Endothelial cell of umbilical vein (primary cell): ENCODE measurements at regions of chr2 and their contacts with region 1.

Region 1: GRCh38 chr2:118046634-118047210 is 32.9 kb upstream of the CCDC93 start:
- DNase-seq: peak; percentile 60
- H3K4me3 ChIP-seq: no peak overlapping the region
- H3K27ac ChIP-seq: no peak overlapping the region
- H3K4me1 ChIP-seq: peaks cover 26% of the 10 kb centered on the region
- H3K27me3 ChIP-seq: peaks cover 10 to 13% of the 10 kb centered on the region in 2 experiments
- CTCF ChIP-seq: peak; percentile 41 to 44
- POLR2A ChIP-seq: no peak

Region 2: DNA sequence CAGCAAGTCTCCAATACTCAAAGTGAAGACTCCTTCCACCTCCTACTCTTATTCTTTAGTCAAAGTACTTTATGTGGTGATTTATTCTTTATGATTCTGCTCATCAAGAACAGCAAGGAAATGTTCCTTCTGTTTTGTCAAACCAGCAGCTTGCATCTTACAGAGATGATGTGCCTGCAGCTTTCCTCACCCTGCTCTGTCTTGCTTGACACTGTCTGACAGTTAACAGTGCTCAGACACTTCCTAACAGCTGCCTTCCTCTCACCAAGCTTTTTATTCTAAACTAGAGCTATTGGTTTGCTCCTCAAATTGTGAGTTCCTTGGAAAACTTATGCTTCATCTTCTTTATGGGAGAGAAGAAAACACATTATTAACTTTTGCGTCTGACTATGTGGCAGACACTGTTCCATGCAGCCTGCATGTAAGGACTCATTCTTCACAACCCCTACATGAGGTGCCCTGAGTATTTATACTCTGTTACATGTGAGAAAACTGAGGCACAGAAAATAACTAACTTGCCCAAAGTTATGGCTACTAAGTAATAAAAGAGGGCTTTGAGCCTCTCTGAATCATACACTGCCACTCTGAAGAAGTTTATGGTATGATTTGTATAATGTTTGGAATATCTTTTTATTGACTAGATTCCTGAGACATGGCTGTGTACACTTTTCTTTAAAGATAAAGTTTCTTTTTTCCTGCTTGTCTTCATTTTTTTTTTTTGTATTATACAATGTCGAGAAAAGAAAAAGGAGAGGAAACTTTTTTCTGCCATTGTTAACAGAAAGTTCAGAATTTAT is 955.5 kb before region 1 on chr2:
- CTCF ChIA-PET with region 1: no interaction called
- POLR2A ChIA-PET with region 1: no interaction called
- dilution Hi-C with region 1: no loop called
- intact Hi-C with region 1: no loop called
- DNase-seq: no peak
- H3K4me3 ChIP-seq: no peak overlapping the region
- H3K27ac ChIP-seq: no peak overlapping the region
- H3K4me1 ChIP-seq: no peaks in the 10 kb centered on the region
- H3K27me3 ChIP-seq: no peaks in the 10 kb centered on the region
- CTCF ChIP-seq: no peak
- POLR2A ChIP-seq: no peak

Region 3: DNA sequence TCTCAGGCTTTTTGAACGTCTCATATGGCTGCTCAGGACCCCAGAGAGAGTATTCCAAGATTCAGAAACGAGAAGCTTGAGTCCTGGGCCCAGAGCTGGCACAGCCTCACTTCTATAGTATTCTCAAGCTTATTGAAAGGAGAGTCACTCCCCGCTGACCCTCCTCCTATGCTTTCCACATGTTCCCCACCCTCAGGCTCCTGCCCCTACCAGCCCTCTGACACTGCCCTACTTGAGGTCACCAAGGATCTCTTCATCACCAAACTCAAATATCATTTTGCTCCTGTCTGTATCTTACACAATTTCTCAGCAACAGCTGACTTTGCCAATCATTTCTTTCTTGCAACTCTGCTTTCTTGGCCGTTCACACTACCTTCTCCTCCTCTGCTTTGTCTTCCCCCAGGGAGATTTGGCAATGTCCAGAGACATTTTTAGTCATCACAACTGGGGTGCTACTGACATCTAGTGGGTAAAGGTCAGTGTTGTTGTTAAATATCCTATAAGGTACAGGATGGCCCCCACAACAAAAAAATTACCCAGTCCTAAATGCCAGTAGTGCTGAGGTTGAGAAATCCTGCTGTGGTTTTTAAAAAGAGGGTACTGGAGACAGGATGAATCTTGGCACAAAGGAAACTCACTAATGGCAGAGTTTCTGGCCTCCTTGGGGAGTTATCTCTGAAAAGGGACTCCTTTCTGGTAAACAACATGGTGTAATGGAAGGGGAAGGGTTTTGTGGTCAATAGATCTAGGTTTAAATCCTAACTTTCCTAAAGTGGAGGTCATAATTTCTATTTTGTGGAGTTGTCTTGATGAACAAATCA is 14.6 kb after region 1 on chr2:
- CTCF ChIA-PET with region 1: interaction called, 75 read pairs
- POLR2A ChIA-PET with region 1: no interaction called
- dilution Hi-C with region 1: no loop called
- intact Hi-C with region 1: loop called (anchors 2 kb)
- DNase-seq: peak; percentile 7
- H3K4me3 ChIP-seq: no peak overlapping the region
- H3K27ac ChIP-seq: no peak overlapping the region
- H3K4me1 ChIP-seq: no peaks in the 10 kb centered on the region
- H3K27me3 ChIP-seq: peaks cover 5 to 8% of the 10 kb centered on the region in 2 experiments
- CTCF ChIP-seq: no peak
- POLR2A ChIP-seq: no peak

Region 4: GRCh38 chr2:118122594-118123281 is 76.0 kb after region 1 on chr2:
- CTCF ChIA-PET with region 1: interaction called, 21 read pairs
- POLR2A ChIA-PET with region 1: no interaction called
- dilution Hi-C with region 1: no loop called
- intact Hi-C with region 1: loop called (anchors 2 kb)
- DNase-seq: no peak
- H3K4me3 ChIP-seq: no peak overlapping the region
- H3K27ac ChIP-seq: peak overlapping the region; percentile 62
- H3K4me1 ChIP-seq: peaks cover 28% of the 10 kb centered on the region
- H3K27me3 ChIP-seq: no peaks in the 10 kb centered on the region
- CTCF ChIP-seq: no peak
- POLR2A ChIP-seq: no peak

Region 5: DNA sequence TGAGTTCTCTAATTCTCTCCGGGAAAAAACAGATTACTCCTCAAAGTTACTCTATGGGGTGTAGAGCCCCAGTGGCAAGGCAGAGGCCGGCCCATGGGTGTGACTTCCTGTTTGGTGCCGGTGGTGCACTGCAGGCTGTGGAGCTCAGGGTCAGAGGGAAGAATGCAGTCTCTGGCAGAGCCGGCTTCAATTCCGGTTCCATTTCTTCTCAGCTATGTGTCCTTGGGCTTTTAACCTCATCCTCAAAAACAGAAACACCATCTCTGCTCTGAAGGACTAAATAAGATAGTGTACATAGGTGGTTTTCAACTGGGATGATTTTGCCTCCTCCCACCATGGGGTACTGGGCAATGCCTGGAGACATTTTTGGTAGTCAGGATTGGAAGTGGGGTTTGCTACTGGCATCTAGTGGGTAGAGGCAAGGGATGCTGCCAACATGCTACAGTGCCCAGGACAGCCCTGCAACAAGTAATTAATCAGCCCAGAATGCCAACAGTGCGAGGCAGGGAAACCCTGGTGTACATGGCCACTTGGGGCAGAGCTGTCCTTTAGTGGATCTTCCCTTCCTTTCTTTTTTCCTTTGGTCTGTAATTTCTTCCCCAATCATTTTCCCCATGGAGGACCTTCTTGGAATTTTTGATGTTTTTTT is 122.8 kb after region 1 on chr2:
- CTCF ChIA-PET with region 1: interaction called, 10 read pairs
- POLR2A ChIA-PET with region 1: no interaction called
- dilution Hi-C with region 1: no loop called
- intact Hi-C with region 1: no loop called
- DNase-seq: no peak
- H3K4me3 ChIP-seq: no peak overlapping the region
- H3K27ac ChIP-seq: no peak overlapping the region
- H3K4me1 ChIP-seq: no peaks in the 10 kb centered on the region
- H3K27me3 ChIP-seq: peaks cover 0 to 5% of the 10 kb centered on the region in 2 experiments
- CTCF ChIP-seq: peak in 1 of 2 donors; percentile 7
- POLR2A ChIP-seq: no peak

Region 6: GRCh38 chr2:118207889-118208288 is 161.2 kb after region 1 on chr2:
- CTCF ChIA-PET with region 1: interaction called, 26 read pairs
- POLR2A ChIA-PET with region 1: no interaction called
- dilution Hi-C with region 1: no loop called
- intact Hi-C with region 1: loop called (anchors 2 kb)
- DNase-seq: no peak
- H3K4me3 ChIP-seq: no peak overlapping the region
- H3K27ac ChIP-seq: no peak overlapping the region
- H3K4me1 ChIP-seq: no peaks in the 10 kb centered on the region
- H3K27me3 ChIP-seq: peaks cover 7 to 10% of the 10 kb centered on the region in 2 experiments
- CTCF ChIP-seq: no peak
- POLR2A ChIP-seq: no peak

Region 7: GRCh38 chr2:118855451-118856279 is 808.9 kb after region 1 on chr2:
- CTCF ChIA-PET with region 1: interaction called, 174 read pairs
- POLR2A ChIA-PET with region 1: no interaction called
- dilution Hi-C with region 1: no loop called
- intact Hi-C with region 1: loop called (anchors 1 kb)
- DNase-seq: peak; percentile 68
- H3K4me3 ChIP-seq: no peak overlapping the region
- H3K27ac ChIP-seq: no peak overlapping the region
- H3K4me1 ChIP-seq: peaks cover 2% of the 10 kb centered on the region
- H3K27me3 ChIP-seq: peaks cover 95 to 98% of the 10 kb centered on the region in 2 experiments
- CTCF ChIP-seq: peak; percentile 81 to 90
- POLR2A ChIP-seq: no peak